Adrenal gland (tissue), 19 donors: ENCODE measurements at regions of chr6 and their contacts with region 1.

Region 1: DNA sequence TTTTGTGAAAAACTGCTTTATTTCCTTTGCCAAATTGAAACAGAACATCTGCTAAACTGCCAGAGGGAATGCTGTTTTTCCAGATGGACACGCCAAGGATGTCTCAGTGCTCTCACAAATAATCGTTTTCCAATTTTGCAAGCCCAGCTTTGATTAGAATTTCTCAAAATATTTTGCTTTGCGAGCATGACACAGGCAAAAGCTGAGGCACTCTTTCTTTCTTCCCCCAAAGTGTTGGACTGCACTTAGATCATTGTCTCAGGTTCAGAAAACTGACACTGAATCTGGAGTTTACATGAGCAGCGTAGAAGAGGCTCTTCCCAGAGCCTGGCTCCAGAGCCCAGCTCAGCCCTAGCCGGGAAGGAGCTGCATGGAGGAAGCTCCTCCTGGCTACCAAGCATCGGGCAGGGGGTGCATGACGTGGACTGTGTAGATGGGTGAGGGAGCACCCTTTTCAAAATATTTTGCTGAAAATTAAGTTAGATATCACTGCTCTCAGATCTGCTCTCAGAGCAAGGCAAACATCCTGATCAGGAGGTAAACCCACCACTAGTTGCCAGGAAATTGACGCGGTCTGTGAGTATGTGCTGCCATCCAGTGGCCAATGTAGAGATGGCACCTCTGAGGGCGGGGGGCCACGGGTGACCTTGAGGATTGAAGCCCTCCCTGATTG is 107.5 kb downstream of the SLC22A3 start:
- DNase-seq: peak; percentile 47 to 83 (median 60)
- H3K4me3 ChIP-seq: peak overlapping the region in 1 of 4 donors; percentile 43
- H3K27ac ChIP-seq: peak overlapping the region in 2 of 5 donors; percentile 52 to 70
- H3K4me1 ChIP-seq: peaks cover 0 to 10% of the 10 kb centered on the region in 2 donors
- H3K27me3 ChIP-seq: no peaks in the 10 kb centered on the region
- CTCF ChIP-seq: peak; percentile 92 to 99 (median 99)
- POLR2A ChIP-seq: no peak

Region 2: GRCh38 chr6:160088069-160088783 is 367.5 kb before region 1 on chr6:
- intact Hi-C with region 1: loop called in 1 of 2 experiments (anchors 10 kb)
- DNase-seq: peak; percentile 69 to 90 (median 80)
- H3K4me3 ChIP-seq: no peak overlapping the region
- H3K27ac ChIP-seq: no peak overlapping the region
- H3K4me1 ChIP-seq: peaks cover 0 to 4% of the 10 kb centered on the region in 2 donors
- H3K27me3 ChIP-seq: no peaks in the 10 kb centered on the region
- CTCF ChIP-seq: peak; percentile 51 to 82 (median 70)
- POLR2A ChIP-seq: no peak

Region 3: DNA sequence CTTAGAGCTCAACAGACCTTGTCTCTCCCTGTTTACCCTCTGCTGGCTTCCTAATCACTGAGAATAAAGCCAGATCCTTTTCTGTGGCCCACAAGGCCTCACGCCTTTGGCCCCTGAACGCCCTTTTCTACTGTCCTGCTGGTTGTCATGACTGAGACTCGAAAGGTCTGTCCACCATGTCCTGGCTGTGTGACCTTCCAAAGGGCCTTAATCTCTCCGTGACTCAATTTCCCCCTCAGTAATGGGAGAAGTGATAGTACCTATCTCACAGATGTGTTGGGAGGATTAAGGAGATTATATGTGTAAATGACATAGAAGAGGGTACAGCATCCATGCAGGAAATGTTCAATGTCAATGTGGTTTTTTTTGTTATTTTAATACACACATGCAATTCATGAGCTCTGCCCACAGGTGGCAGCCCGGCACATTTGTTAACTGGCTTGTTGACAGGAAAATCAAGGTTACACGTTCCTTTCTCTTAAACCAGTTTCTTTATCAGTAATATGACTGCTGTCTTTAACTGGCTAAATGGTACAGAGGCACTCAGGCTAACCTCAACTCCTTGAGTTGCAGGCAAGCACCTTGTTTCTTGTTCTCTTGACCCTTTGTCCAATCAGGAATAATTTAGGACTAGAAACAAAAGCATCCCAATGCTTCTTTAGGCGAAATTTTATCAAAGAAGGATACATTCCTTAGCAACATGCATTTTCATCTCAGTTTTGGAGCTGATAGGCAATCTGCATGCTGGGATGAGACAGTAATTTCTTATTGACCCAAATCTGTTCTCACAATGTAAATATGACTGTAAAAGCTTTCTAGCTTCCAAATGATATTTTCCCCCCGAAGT is 317.5 kb before region 1 on chr6:
- intact Hi-C with region 1: loop called (anchors 5 to 10 kb)
- DNase-seq: peak; percentile 54 to 84 (median 70)
- H3K4me3 ChIP-seq: no peak overlapping the region
- H3K27ac ChIP-seq: peak overlapping the region; percentile 29 to 56 (median 40)
- H3K4me1 ChIP-seq: peaks cover 0 to 17% of the 10 kb centered on the region in 2 donors
- H3K27me3 ChIP-seq: no peaks in the 10 kb centered on the region
- CTCF ChIP-seq: peak; percentile 74 to 86 (median 78)
- POLR2A ChIP-seq: no peak

Region 4: DNA sequence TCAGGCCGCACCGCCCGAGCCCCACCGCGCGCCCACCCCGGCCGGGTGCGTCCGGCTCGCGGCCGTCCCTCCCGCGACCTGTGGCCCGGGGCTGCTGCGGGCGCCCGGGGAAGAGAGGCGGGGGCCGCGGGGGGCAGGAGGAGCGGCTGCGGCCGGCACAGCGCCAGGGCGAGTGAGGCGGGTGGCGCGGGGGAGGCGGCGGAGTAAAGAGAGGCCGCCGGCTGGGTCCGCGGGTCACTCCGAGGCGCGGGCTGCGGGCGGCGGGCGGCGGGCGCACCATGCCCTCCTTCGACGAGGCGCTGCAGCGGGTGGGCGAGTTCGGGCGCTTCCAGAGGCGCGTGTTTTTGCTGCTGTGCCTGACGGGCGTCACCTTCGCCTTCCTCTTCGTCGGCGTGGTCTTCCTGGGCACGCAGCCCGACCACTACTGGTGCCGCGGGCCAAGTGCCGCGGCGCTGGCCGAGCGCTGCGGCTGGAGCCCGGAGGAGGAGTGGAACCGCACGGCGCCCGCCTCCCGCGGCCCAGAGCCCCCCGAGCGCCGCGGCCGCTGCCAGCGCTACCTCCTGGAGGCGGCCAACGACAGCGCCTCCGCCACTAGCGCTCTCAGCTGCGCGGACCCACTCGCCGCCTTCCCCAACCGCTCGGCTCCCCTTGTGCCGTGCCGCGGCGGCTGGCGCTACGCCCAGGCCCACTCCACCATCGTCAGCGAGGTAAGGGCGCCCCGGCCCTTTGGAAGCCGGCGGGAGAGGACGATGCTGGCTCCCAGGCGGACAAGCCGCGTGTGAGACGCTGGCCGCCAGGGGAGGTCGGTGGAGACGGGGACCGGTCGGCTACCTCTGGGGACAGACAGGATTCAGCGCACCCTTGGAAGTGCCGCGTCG is 107.3 kb before region 1 on chr6 and contains the start of gene SLC22A3:
- intact Hi-C with region 1: loop called in 1 of 2 experiments (anchors 5 kb)
- DNase-seq: peak in 6 of 7 donors; percentile 39 to 75 (median 66)
- H3K4me3 ChIP-seq: peak within 1 kb of the TSS in 3 of 4 donors; percentile 50 to 71 (median 70)
- H3K27ac ChIP-seq: peak within 1 kb of the TSS in 3 of 5 donors; percentile 72 to 82 (median 77)
- H3K4me1 ChIP-seq: peaks cover 5 to 8% of the 10 kb centered on the region in 2 donors
- H3K27me3 ChIP-seq: no peaks in the 10 kb centered on the region
- CTCF ChIP-seq: peak in 4 of 6 experiments; percentile 34 to 51 (median 36)
- POLR2A ChIP-seq: peak; percentile 30 to 68
- total RNA-seq, gene SLC22A3: 7.2 to 51.9 (median 33.7) TPM